Cardiac septum (tissue), 1 donor: ENCODE measurements at regions of chr2 and their contacts with region 1.

Region 1: DNA sequence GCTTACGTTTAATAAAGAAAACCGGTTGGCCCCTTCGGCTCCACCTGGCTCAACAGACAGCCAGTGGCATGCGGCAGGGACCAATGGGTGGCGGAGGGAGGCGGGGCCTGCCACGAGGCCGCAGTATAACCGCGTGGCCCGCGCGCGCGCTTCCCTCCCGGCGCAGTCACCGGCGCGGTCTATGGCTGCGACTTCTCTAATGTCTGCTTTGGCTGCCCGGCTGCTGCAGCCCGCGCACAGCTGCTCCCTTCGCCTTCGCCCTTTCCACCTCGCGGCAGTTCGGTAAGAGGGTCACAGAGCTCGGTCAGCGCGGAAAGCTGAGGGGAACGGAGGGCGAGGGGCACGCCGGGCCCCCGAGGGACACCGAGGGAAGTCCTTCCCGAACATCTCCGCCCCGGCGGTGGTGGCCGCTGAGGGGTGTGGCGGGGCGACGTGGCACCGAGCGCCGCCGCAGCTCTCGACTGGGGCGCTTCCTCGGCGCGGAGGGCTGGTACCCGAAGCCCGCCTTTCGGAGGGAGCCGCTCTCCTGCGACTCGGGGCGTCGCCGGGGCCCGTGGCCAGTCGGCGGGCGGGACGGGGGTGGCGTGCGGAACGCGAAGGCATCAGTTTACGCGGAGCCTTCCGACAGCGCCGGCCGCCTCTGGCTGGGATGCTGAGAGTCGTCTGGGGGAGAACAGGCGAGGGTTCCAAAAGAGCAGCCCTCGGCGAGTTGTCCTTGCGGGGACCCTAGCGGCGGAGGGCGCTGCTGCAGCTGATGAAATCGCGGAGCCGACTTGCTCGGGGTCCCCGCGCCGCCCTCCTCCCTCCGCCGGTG is at the start of gene MTHFD2:
- DNase-seq: peak; percentile 95
- total RNA-seq, gene MTHFD2: 26.8 TPM

Region 2: DNA sequence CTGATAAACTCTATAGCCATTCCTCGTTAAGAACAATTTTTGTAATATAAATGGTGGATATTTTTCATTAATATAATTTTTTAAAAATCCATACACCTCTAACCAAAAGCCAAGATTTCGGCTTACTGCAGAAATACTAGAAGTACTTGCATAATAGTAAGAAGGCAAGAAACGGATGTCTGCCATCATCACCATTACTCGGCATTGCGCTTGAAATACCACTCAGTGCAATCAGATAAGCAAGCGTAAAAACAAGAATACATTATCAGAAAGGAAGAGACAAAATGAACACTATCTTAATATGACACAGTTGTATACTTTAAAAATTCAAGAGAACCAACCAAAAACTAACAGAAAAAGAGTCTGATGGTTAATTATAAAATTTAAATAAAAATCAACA is 35.7 kb before region 1 on chr2:
- intact Hi-C with region 1: no loop called
- DNase-seq: no peak

Region 3: DNA sequence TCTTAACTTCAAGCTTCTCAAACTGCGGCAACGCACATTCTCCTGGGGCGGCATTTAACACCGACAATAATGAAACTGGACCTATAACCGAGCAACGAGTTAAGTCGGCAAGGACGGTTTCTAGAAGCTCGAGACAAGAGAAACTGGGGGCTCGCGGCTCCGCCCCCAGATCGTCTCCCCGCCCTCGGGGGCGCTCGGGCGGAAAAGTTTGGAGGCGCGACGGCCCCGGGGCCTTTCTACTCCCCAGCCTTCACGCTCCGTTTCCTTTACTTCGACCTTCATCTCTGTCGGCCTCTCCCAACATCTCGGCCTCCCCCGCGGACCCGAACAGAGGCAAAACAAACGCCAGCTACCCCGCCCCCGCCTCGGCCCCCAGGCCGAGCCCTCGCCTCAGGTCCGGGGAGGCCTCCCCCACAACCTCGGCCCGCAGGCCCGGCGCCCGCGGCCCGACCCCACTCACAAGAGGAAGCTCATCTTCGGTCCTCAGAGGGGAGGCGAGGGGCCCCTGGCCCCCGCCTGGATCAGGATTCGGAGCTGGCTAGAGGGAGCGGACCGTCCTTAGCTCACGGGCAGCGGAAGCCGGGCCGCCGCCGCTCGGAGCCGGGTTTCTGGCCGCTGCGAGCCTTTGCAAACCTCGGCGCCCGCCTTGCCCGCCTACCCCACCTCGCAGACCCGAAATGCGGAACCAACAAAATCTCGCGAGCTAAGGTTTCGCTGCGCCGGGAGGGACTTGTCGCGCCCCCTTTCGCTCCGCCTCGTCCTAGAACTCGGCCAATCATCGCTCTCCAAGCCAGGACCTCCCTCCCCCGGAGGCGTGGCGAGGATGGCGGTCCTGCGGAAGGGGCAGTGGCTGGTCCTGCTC is 20.2 kb before region 1 on chr2 and contains the start of gene MOB1A:
- intact Hi-C with region 1: loop called (anchors 1 kb)
- DNase-seq: peak; percentile 99
- total RNA-seq, gene MOB1A: 66.9 TPM

Region 4: DNA sequence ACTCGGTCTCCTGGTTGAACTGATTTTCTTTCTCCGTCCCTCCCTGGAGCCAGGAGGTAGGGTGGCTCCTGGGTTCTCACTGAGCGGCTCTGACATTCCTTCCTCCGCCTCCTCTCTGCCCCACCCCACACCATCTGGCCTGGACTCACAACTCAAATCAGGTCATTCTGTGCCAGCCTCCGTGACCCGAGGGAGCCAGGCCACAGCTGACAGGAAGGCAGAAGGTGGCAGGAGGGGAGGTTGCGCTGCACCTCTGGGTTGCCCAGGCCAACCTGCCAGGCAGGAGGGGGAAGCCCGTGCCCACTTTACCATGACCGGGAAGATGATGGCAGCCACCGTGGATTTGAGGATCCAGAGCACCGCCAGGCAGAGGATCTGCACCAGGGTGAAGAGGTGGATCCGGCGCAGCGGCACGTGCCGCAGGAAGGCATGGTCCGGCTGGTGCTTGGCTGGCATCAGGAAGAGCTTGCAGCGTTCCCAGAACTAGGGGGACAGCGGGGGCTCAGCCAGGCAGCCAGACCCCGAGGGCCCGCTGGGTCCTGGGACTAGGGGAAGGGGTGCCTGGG is 28.1 kb after region 1 on chr2:
- intact Hi-C with region 1: loop called (anchors 2 kb)
- DNase-seq: peak; percentile 79

Region 5: DNA sequence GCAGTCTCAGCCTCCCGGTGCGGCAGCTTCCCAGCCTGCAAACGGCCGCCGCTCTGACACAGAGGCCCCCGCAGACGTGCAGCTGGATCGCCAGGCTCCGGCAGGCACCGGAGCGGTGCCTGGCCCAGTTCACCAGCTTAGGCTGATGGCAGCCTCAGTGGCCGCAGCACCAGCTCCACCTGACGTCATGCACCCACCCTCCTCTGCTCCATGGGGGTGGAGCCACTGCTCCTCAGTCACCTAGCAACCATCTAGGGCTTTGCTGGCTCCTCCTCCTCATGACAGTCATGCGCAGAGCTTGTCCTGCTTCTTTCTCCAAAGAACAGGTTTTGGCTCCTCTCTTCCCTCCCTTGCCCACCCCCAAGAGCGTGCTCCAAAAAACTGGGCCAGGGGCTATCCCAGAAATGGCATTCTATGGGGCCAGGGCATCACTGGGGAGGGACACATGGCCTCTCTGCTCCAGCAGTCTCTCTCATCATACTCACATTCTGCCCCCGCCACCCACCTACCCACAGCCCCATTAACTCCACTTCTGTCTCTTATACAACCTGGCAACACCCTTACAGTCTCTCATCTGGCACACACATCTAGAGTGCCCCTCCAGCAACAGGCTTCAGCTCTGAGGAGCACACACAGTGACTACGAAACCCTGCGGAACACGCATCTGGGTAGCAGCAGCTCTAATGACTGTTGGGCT is 176.0 kb after region 1 on chr2:
- intact Hi-C with region 1: no loop called
- DNase-seq: peak; percentile 82